Psoas muscle (tissue), 8 donors: ENCODE measurements at regions of chr2 and their contacts with region 1.

Region 1: GRCh38 chr2:164737612-164738081 is 104.0 kb downstream of the COBLL1 start:
- DNase-seq: peak; percentile 24 to 55
- ATAC-seq: peak; percentile 53 to 83 (median 72)
- H3K4me3 ChIP-seq: no peak overlapping the region
- H3K27ac ChIP-seq: no peak overlapping the region
- H3K4me1 ChIP-seq: peaks cover 3% of the 10 kb centered on the region
- H3K27me3 ChIP-seq: no peaks in the 10 kb centered on the region
- CTCF ChIP-seq: peak; percentile 77

Region 2: GRCh38 chr2:164302786-164303185 is 434.9 kb before region 1 on chr2:
- intact Hi-C with region 1: no loop called
- DNase-seq: no peak
- ATAC-seq: no peak
- H3K4me3 ChIP-seq: no peak overlapping the region
- H3K27ac ChIP-seq: no peak overlapping the region
- H3K4me1 ChIP-seq: no peaks in the 10 kb centered on the region
- H3K27me3 ChIP-seq: no peaks in the 10 kb centered on the region
- CTCF ChIP-seq: no peak

Region 3: DNA sequence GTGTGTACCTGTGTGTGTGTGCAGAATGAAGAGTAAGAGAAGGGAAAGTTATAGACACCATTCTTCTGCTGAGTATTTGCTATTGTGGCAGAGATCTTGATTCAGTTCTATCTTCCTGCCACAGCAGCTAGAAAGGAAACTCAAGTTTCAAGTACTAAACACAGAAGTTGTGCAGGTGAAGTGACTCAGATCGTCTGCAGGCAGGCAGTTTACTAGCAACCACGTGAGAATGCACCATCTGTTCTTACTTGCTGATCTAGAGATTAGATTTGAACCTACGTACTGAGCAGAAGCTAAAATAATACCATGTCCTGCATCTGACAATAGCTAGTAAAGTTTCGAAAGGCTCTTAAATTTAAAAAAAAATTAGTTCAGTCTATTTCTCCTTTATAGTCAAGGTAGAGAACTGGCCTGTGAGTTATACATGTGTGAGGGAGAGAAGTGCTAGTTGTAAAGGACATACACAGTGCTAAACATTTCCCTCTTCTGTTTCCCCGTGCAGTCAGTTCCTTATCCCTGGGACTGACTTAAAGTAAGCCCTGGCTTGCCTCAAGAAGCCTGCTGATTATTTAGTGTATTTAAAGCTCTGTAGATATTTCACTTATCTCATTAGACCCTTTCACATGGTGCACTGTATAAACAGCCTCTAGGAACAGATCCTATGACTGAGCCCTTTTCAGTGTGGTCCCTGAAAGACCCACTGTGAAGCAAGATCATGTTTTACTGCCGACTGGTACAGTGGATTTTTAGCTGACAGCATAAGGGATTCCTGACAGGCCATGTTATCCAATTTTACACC is 172.7 kb after region 1 on chr2:
- intact Hi-C with region 1: loop called in 1 of 2 experiments (anchors 5 kb)
- DNase-seq: no peak
- ATAC-seq: no peak
- H3K4me3 ChIP-seq: no peak overlapping the region
- H3K27ac ChIP-seq: no peak overlapping the region
- H3K4me1 ChIP-seq: no peaks in the 10 kb centered on the region
- H3K27me3 ChIP-seq: no peaks in the 10 kb centered on the region
- CTCF ChIP-seq: no peak

Region 4: DNA sequence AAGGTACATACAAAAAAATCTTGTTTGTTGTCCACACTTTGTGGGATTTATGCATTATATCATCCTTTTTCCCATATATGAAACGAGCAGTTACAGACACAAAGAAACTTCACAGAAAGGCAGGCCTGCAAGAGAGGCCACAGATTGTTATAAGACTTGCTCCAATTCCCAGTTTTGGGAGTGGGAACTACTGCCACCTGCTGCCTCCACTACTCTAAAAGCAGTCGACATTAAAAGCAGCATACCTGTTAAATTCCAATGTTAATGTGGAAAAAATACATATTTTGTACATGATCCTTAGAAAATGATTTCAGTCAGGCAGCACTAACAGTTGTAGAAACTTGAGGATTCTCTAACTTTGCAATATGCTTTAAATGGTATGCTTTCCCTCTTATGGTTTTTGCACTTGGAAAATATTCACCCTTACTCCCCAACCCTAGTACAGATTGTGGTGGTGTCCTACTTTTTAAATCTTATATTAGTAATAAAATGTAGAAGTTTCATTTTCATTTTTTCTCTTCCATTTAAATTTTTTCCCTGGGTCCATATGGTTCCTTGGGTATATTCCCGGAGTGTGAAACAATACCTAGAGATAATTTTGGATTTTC is 179.8 kb after region 1 on chr2:
- intact Hi-C with region 1: loop called (anchors 2 to 5 kb)
- DNase-seq: peak in 1 of 2 donors; percentile 28
- ATAC-seq: no peak
- H3K4me3 ChIP-seq: no peak overlapping the region
- H3K27ac ChIP-seq: no peak overlapping the region
- H3K4me1 ChIP-seq: no peaks in the 10 kb centered on the region
- H3K27me3 ChIP-seq: no peaks in the 10 kb centered on the region
- CTCF ChIP-seq: peak; percentile 51

Region 5: GRCh38 chr2:164935118-164936101 is 197.8 kb after region 1 on chr2:
- intact Hi-C with region 1: no loop called
- DNase-seq: no peak
- ATAC-seq: no peak
- H3K4me3 ChIP-seq: no peak overlapping the region
- H3K27ac ChIP-seq: no peak overlapping the region
- H3K4me1 ChIP-seq: no peaks in the 10 kb centered on the region
- H3K27me3 ChIP-seq: no peaks in the 10 kb centered on the region
- CTCF ChIP-seq: no peak

Region 6: GRCh38 chr2:165833158-165833557 is 1095.5 kb after region 1 on chr2:
- intact Hi-C with region 1: no loop called
- DNase-seq: no peak
- ATAC-seq: no peak
- H3K4me3 ChIP-seq: no peak overlapping the region
- H3K27ac ChIP-seq: no peak overlapping the region
- H3K4me1 ChIP-seq: no peaks in the 10 kb centered on the region
- H3K27me3 ChIP-seq: no peaks in the 10 kb centered on the region
- CTCF ChIP-seq: no peak